Sigmoid colon (tissue), 7 donors: ENCODE measurements at regions of chr15 and their contacts with region 1.

Region 1: GRCh38 chr15:63288778-63289378 is 11.5 kb downstream of the APH1B start:
- DNase-seq: no peak
- H3K4me3 ChIP-seq: no peak overlapping the region
- H3K27ac ChIP-seq: no peak overlapping the region
- H3K4me1 ChIP-seq: peaks cover 0 to 9% (median 0%) of the 10 kb centered on the region in 4 donors
- H3K27me3 ChIP-seq: no peaks in the 10 kb centered on the region
- CTCF ChIP-seq: peak; percentile 13 to 66 (median 52)
- EP300 ChIP-seq: no peak
- POLR2A ChIP-seq: no peak

Region 2: DNA sequence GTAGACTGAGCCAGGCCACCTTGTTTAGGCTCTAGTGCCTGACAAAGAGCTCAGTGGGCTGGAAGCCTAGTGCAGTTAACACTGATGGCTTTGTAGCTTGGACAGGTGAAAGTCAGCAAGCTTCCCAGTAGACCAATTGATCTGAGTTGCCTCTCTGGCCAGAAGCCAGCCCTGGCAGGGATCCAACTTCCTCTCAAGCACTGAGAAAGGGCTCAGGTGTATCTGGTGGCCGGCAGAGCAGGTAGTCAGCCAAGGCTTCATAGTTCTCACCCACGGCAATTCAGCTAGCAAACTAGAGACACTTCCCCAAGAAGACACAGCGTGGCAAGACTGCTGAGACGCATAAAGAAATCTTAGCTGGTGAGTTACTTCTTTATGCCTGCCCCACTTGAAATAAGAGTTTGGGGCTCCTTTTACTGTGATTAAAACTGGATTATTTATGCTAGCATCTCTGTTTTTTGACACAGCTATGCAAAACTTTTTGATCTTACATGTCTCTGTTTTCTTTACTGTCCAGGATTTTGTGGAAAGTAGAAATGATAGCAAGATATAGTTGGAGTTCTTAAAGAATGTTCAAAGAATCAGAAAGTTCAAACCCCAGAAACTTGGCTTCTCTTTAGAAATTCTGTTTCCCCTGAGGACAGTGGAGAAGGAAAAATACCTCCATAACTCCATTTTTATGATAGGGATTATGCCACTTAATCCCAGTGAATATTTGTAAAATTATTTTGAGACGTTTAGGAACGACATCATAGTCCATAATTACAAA is 101.2 kb after region 1 on chr15:
- intact Hi-C with region 1: no loop called
- DNase-seq: no peak
- H3K4me3 ChIP-seq: no peak overlapping the region
- H3K27ac ChIP-seq: no peak overlapping the region
- H3K4me1 ChIP-seq: no peaks in the 10 kb centered on the region
- H3K27me3 ChIP-seq: no peaks in the 10 kb centered on the region
- CTCF ChIP-seq: no peak
- EP300 ChIP-seq: no peak
- POLR2A ChIP-seq: no peak

Region 3: DNA sequence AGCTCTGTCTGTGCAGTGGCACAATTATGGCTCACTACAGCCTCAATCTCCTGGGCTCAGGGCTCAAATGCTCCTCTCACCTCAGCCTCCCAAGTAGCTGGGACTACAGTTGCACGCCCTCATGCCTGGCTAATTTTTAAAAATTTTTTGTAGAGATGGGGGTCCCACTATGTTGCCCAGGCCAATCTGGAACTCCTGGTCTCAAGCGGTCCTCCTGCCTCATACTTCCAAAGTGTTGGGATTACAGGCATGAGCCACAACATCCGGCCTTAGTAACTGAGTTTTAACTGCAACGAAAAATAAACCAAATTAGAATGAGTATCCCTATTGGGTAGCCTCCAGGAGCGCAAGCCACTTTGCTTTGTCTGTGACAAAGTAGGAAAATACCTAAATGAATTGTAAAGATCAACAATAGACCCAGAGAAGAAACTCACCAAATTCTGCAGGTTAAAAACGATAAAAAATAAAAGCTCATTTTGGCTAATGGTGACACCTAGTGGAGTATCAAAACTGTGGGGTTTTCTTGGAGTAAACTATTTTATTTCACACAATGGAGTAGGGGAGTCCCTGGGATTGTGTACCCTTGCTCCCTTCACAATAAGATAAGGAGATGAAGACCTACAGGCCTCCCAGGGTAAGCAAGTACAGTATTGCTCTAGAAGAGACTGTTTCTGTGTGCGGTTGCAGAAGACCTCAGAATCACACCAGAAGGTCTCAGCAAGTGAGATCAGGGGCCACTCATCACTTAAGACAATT is 113.8 kb after region 1 on chr15:
- intact Hi-C with region 1: loop called (anchors 1 kb)
- DNase-seq: no peak
- H3K4me3 ChIP-seq: no peak overlapping the region
- H3K27ac ChIP-seq: no peak overlapping the region
- H3K4me1 ChIP-seq: no peaks in the 10 kb centered on the region
- H3K27me3 ChIP-seq: no peaks in the 10 kb centered on the region
- CTCF ChIP-seq: peak; percentile 5 to 69 (median 59)
- EP300 ChIP-seq: no peak
- POLR2A ChIP-seq: no peak